Activated T-helper 2 cell treated with anti-CD3 and anti-CD28 coated beads, Interferon-gamma antibody, Interleukin-2, Interleukin-4, amounts not matched to agents 10 μg/mL and 5 μg/mL and 100 μg/mL, durations not matched to agents 14 hours and 24 hours and 36 hours (primary cell): ENCODE measurements at regions of chr1 and their contacts with region 1.

Region 1: DNA sequence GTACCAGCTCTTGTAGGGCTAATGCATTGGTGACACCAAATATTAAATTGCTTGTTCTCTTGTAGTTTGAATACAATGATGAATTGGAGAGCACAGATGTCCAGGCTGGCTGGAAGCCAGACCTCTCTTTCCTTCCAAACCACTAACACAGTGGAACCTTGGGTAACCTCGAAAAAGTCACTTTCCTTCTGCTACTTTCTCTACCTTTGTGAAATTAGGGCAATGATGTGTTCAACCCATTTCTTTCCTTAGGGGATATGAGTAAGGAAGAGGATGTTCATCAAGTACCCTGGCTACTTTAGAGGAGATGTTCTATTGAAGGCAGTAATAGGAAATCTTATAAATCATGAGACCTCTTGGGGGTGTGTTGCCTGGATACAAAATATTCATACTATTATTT is 55.7 kb downstream of the XCL2 start:
- DNase-seq: no peak
- H3K4me3 Mint-ChIP-seq: no peak overlapping the region
- H3K27ac Mint-ChIP-seq: no peak overlapping the region
- H3K4me1 Mint-ChIP-seq: peaks cover 26% of the 10 kb centered on the region
- H3K27me3 Mint-ChIP-seq: no peaks in the 10 kb centered on the region

Region 2: GRCh38 chr1:168504064-168504837 is 16.1 kb after region 1 on chr1:
- intact Hi-C with region 1: loop called (anchors 2 kb)
- DNase-seq: no peak
- H3K4me3 Mint-ChIP-seq: no peak overlapping the region
- H3K27ac Mint-ChIP-seq: no peak overlapping the region
- H3K4me1 Mint-ChIP-seq: peaks cover 71% of the 10 kb centered on the region
- H3K27me3 Mint-ChIP-seq: no peaks in the 10 kb centered on the region

Region 3: DNA sequence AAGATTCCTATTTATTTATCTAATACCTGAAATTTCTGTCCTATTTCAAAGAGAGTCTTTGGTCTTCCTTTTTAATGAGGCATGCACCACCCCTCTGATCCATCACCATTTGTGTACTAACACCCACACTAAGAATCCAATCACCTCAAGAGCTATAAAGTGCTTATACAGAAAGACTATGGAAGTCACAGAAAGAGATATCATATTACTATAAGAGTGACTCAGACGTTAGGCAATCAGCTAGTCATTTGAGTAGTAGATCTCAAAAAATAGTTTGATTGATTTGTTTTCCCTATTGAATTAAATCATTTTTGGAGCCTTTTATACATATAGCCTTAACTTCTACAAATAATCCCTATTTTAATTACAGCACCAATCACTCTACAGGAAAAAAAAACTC is 833.4 kb after region 1 on chr1:
- intact Hi-C with region 1: loop called (anchors 5 kb)
- DNase-seq: no peak
- H3K4me3 Mint-ChIP-seq: no peak overlapping the region
- H3K27ac Mint-ChIP-seq: no peak overlapping the region
- H3K4me1 Mint-ChIP-seq: peaks cover 11% of the 10 kb centered on the region
- H3K27me3 Mint-ChIP-seq: no peaks in the 10 kb centered on the region